ENCODE measurements at regions of chr5 and their contacts with region 1.

Region 1: GRCh38 chr5:98928873-98929696 is at the start of gene CHD1:
- DNase-seq: peak; percentile 94
- ATAC-seq: peak; percentile 66
- H3K4me3 Mint-ChIP-seq: peak within 1 kb of the TSS; percentile 95
- H3K27ac Mint-ChIP-seq: peak within 1 kb of the TSS; percentile 100
- H3K4me1 Mint-ChIP-seq: peaks cover 56% of the 10 kb centered on the region
- H3K27me3 Mint-ChIP-seq: no peaks in the 10 kb centered on the region
- total RNA-seq, gene CHD1: 44.5 to 46.0 TPM

Region 2: GRCh38 chr5:98911280-98912040 is 17.6 kb before region 1 on chr5:
- CTCF ChIA-PET with region 1: interaction called, 4 read pairs
- POLR2A ChIA-PET with region 1: interaction called, 24 read pairs
- DNase-seq: no peak
- ATAC-seq: no peak
- H3K4me3 Mint-ChIP-seq: no peak overlapping the region
- H3K27ac Mint-ChIP-seq: no peak overlapping the region
- H3K4me1 Mint-ChIP-seq: peaks cover 35% of the 10 kb centered on the region
- H3K27me3 Mint-ChIP-seq: no peaks in the 10 kb centered on the region

Region 3: DNA sequence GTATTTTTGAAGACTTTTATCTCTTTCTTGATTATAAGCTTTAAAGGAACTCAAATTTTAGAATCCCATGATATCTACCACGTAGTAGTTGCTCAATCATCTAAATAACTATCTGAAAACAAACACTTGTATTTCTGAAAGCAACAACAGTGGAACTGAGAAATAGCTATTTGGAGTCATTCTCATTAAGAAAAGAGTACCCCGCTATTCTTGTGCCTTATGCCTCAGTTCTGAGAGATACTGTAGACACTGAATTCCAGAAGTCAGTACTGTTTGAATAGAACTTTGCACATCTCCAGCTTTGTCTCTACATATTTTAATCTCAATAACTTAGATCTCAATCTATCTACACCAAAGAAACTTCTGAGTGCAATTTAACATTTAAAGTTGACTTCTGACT is 11.7 kb before region 1 on chr5:
- CTCF ChIA-PET with region 1: interaction called, 7 read pairs
- POLR2A ChIA-PET with region 1: interaction called, 24 read pairs
- DNase-seq: no peak
- ATAC-seq: no peak
- H3K4me3 Mint-ChIP-seq: no peak overlapping the region
- H3K27ac Mint-ChIP-seq: no peak overlapping the region
- H3K4me1 Mint-ChIP-seq: peaks cover 47% of the 10 kb centered on the region
- H3K27me3 Mint-ChIP-seq: no peaks in the 10 kb centered on the region

Region 4: GRCh38 chr5:99032234-99033013 is 103.3 kb after region 1 on chr5:
- CTCF ChIA-PET with region 1: interaction called, 10 read pairs
- POLR2A ChIA-PET with region 1: interaction called, 24 read pairs
- DNase-seq: peak; percentile 36
- ATAC-seq: no peak
- H3K4me3 Mint-ChIP-seq: peak overlapping the region; percentile 81
- H3K27ac Mint-ChIP-seq: peak overlapping the region; percentile 94
- H3K4me1 Mint-ChIP-seq: peaks cover 59% of the 10 kb centered on the region
- H3K27me3 Mint-ChIP-seq: no peaks in the 10 kb centered on the region

Region 5: GRCh38 chr5:99037668-99038067 is 108.6 kb after region 1 on chr5:
- CTCF ChIA-PET with region 1: interaction called, 10 read pairs
- POLR2A ChIA-PET with region 1: interaction called, 14 read pairs
- DNase-seq: peak; percentile 82
- ATAC-seq: peak; percentile 68
- H3K4me3 Mint-ChIP-seq: peak overlapping the region; percentile 30
- H3K27ac Mint-ChIP-seq: peak overlapping the region; percentile 77
- H3K4me1 Mint-ChIP-seq: peaks cover 55% of the 10 kb centered on the region
- H3K27me3 Mint-ChIP-seq: no peaks in the 10 kb centered on the region

Region 6: GRCh38 chr5:99060306-99061261 is 131.5 kb after region 1 on chr5:
- CTCF ChIA-PET with region 1: interaction called, 10 read pairs
- POLR2A ChIA-PET with region 1: interaction called, 5 read pairs
- DNase-seq: peak; percentile 89
- ATAC-seq: no peak
- H3K4me3 Mint-ChIP-seq: no peak overlapping the region
- H3K27ac Mint-ChIP-seq: no peak overlapping the region
- H3K4me1 Mint-ChIP-seq: no peaks in the 10 kb centered on the region
- H3K27me3 Mint-ChIP-seq: peaks cover 5% of the 10 kb centered on the region

Measured in activated CD8-positive, alpha-beta T cell treated with anti-CD3 and anti-CD28 coated beads, Interleukin-2, amount 10 ng/mL, durations not matched to agents 7 days and 5 days (primary cell).